ENCODE measurements at regions of chr5 and their contacts with region 1.

Region 1: DNA sequence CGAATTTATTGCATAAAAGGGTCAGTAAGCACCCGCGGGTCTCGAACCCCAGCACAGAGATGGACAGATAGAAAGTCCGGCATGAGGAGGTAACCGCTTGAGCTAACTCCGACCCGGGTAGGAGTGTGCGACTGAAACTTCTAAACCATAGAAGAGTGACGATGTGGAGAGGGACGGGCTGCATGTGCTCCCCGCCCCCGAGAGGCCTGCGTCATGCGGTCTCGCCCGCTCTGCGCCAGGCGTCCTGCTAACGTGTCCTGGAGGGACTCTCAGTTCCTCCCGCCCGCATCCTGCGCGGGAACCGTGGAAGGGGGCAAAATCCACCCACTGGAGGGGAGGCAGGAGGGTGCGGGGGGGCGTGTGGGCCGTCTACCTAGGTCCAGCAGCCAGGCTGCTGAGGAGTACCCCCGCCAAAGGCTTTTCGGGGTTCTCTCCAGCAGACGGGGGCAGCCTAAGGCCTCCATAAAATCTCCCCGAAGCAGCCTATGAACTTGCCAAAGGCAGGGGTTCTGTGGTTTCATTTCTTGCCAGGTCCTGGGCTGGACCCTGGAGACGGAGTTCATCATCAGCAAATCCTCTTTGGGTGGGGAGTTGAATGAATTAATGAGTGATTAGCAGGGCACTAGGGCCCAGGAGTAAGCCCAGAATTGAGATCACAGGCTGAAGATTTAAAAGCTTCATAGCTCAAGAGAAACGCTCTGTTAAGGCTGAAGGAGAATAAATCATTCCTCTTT is 51.9 kb downstream of the TGFBI start:
- DNase-seq: peak; percentile 46
- H3K4me3 ChIP-seq: peak overlapping the region; percentile 5 to 11
- H3K27ac ChIP-seq: peak overlapping the region in 1 of 2 donors; percentile 40
- H3K4me1 ChIP-seq: no peaks in the 10 kb centered on the region
- H3K27me3 ChIP-seq: no peaks in the 10 kb centered on the region
- CTCF ChIP-seq: no peak
- POLR2A ChIP-seq: no peak

Region 2: DNA sequence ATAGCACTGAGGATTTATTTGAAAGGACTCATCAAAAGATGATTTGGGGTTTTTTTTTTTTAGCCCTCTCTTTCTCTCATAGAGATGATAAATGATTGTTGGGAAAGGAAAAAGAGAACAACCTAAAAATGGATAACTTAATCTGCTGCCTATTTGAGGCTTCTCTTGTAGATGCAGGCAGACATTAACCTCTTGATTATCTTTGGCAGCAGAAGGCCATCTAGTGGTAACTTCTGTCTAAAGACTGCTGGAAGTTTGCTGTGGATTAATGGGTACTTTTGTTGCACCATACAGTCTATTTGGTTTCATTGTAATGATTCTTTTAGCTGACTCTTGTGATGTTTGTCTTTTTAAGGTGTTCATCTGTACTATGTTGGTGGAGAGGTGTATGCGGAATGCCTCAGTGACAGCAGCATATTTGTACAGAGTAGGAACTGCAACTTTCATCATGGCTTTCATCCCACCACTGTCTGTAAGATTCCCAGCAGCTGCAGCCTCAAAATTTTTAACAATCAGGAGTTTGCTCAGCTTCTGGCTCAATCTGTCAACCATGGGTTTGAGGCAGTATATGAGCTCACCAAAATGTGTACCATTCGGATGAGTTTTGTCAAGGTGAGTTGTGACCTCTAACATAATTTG is 93.5 kb after region 1 on chr5:
- intact Hi-C with region 1: loop called (anchors 10 kb)
- DNase-seq: no peak
- H3K4me3 ChIP-seq: no peak overlapping the region
- H3K27ac ChIP-seq: no peak overlapping the region
- H3K4me1 ChIP-seq: no peaks in the 10 kb centered on the region
- H3K27me3 ChIP-seq: no peaks in the 10 kb centered on the region
- CTCF ChIP-seq: peak in 3 of 4 experiments; percentile 37 to 71 (median 65)
- POLR2A ChIP-seq: no peak

Region 3: DNA sequence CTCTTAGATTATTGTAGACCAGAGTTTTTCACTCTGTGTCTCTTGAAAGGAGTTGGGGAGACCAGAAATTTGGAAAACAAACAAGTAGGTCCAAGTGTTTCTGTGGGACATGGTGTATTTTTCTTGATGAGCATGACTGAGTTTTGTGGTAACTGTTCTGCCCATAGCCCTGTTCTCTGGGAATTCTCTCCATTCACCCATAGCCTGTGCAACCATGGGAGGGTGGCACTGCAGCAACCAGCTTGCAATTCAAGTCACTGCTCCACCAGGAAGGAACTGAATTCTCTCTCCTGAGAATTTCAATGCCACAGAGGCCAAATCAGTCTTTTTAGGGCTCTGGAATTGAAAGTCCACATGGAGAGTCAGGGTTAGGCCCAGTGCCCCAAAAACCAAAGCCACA is 760.0 kb after region 1 on chr5:
- intact Hi-C with region 1: no loop called
- DNase-seq: no peak
- H3K4me3 ChIP-seq: no peak overlapping the region
- H3K27ac ChIP-seq: no peak overlapping the region
- H3K4me1 ChIP-seq: no peaks in the 10 kb centered on the region
- H3K27me3 ChIP-seq: no peaks in the 10 kb centered on the region
- CTCF ChIP-seq: no peak
- POLR2A ChIP-seq: no peak

Measured in prostate gland (tissue), 2 donors.